Activated CD4-positive, alpha-beta memory T cell treated with anti-CD3 and anti-CD28 coated beads, Interleukin-2, amount 10 ng/mL, durations not matched to agents 7 days and 5 days (primary cell): ENCODE measurements at regions of chr1 and their contacts with region 1.

Region 1: DNA sequence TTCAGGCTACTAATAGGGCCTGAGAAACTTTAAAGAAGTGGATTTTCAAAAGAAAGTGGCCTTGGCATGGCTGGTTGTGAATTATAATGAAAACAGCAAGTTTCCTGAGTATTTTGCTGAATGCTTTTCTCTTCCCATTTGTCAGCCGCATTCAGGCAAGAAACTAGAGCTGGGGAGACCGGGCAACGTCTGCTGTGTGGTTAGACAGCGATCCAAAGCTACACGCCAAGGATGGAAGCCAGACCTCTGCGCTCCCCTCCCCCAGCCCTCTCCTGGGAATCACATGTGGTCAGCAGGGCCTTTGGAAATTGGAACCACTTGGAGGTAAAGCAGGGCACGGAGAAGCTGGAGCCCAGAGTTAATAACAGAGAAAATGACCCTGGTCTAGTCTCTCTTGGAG is 114.1 kb upstream of the CD34 start:
- DNase-seq: no peak
- H3K4me3 Mint-ChIP-seq: no peak overlapping the region
- H3K27ac Mint-ChIP-seq: no peak overlapping the region
- H3K4me1 Mint-ChIP-seq: no peaks in the 10 kb centered on the region
- H3K27me3 Mint-ChIP-seq: peaks cover 2% of the 10 kb centered on the region

Region 2: DNA sequence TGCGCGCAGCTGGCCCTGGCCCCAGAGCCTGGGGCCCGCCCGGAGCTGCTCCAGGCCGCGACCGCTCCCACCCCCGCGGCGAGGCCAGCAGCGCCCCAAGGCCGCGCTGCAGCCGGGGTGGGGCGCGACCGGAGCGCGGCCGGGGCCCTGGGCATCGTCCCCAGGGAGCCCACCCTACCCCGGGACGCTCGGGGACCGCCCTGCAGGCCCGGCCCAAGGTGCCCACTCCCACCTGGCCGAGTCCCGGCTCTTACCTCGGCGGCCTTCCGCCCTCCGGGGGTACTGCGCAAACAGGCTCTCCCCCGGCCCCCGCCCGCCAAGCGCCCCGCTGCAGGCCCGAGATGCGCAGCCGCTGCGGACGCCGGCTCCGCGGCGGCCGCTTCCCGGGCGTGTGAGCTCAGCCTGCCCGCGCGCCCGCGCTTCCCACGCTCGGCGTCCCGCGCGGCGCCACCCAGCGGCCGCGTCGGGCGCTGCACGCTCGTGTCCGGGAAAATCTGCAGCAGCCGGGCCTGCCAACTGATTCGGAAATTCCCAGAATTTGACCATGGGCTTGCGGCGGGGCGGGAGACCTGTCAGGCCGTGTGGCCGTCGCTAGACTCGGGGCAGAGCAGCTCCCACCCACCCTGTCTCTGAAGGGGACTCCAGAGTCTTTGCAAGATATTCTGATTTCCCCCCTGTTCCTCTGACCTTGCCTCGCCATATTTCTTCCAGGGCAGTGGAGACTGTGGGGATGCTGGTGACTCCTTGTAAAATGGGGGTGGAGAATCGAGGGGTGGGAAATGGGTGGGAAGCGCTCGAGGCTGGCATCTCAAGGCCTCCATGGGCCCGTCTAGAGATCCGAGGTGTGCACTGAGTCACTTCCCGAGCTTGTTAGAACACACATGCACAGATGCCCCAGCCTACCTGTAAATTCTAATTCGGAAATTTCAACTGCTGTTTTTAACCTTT is 156.0 kb before region 1 on chr1:
- CTCF ChIA-PET with region 1: no interaction called
- POLR2A ChIA-PET with region 1: no interaction called
- DNase-seq: peak; percentile 76
- H3K4me3 Mint-ChIP-seq: peak overlapping the region; percentile 93
- H3K27ac Mint-ChIP-seq: peak overlapping the region; percentile 91
- H3K4me1 Mint-ChIP-seq: peaks cover 84% of the 10 kb centered on the region
- H3K27me3 Mint-ChIP-seq: no peaks in the 10 kb centered on the region

Region 3: GRCh38 chr1:207997486-207998268 is 27.4 kb before region 1 on chr1:
- CTCF ChIA-PET with region 1: interaction called, 10 read pairs
- POLR2A ChIA-PET with region 1: no interaction called
- DNase-seq: peak; percentile 58
- H3K4me3 Mint-ChIP-seq: no peak overlapping the region
- H3K27ac Mint-ChIP-seq: no peak overlapping the region
- H3K4me1 Mint-ChIP-seq: no peaks in the 10 kb centered on the region
- H3K27me3 Mint-ChIP-seq: peaks cover 17% of the 10 kb centered on the region

Region 4: DNA sequence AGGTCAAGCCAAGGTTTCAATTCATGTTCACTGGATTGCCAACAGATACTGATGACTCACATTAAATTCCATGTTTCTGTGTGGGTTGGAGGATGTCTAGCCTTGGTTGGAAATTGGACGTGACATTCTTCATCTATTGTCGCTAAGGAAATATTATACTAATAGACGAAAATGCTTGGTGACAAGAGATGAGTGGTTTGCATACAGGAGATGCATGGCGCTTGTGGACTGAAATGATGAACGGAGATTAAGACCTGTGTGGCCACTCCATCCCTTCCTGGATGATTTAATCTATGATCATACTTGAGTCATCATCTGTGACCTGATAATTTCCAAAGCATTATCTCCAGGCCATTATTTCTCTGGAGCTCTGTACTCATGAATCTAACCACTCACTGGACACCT is 17.1 kb before region 1 on chr1:
- CTCF ChIA-PET with region 1: interaction called, 11 read pairs
- POLR2A ChIA-PET with region 1: no interaction called
- DNase-seq: no peak
- H3K4me3 Mint-ChIP-seq: no peak overlapping the region
- H3K27ac Mint-ChIP-seq: no peak overlapping the region
- H3K4me1 Mint-ChIP-seq: no peaks in the 10 kb centered on the region
- H3K27me3 Mint-ChIP-seq: peaks cover 4% of the 10 kb centered on the region

Region 5: DNA sequence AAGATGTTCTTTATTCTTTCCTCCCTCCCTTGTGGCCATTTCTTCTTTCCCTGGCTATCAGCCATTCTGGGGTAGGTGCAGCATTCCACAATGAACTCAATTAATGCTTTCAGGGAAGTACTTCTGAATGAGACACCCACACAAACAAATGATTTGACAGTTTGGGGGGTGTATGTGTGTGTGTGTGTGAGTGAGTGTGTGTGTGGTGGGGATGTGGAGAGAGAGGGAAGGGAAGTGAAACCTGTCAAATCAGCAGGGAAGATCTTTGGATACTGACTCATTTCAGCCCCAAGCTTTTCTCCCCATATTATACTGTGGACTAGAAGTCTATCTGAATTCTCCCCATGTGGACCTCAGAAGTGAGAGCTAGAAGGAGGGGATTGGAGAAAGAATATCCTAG is 40.8 kb after region 1 on chr1:
- CTCF ChIA-PET with region 1: no interaction called
- POLR2A ChIA-PET with region 1: no interaction called
- DNase-seq: no peak
- H3K4me3 Mint-ChIP-seq: no peak overlapping the region
- H3K27ac Mint-ChIP-seq: no peak overlapping the region
- H3K4me1 Mint-ChIP-seq: no peaks in the 10 kb centered on the region
- H3K27me3 Mint-ChIP-seq: peaks cover 3% of the 10 kb centered on the region

Region 6: DNA sequence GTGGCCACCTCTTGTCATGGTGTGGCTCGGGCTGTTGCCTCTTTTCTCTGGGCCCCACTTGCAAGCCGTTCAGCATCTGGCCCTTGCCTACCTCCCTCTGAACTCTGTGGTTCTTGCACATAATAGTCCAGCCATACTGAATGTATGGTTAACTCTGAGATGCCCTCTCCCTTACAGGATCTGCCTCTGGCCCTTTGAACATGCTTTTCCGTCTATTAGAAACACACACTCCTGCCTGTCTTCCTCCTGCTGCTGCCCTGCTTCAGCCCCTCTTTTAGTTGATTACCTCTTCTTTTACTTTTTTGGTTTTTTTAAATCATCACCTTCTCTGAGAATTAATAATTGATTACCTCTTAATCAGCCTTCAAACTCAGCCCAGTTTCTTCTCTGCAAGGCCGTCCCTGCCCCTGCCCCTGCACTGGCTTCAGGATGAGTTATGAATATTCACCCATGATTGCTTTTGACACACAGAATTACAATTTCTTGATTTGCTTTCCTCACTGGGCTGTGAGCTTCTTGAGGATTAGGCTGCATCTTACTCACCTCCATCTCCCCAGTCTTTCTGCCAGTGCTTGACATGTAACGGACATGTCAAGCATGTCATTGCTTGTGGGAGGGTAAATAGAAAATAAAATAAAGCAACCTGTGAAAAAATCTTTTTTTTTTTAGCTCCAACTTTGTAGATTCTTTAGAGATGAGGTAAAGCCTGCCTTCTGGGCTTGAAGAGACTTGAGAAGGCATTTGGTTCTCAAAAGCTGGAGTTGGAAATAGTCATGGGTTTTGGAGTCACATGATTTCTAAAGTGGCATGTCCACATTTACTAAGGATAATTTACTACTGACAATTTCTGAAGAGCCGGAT is 60.9 kb after region 1 on chr1:
- CTCF ChIA-PET with region 1: interaction called, 12 read pairs
- POLR2A ChIA-PET with region 1: no interaction called
- DNase-seq: no peak
- H3K4me3 Mint-ChIP-seq: no peak overlapping the region
- H3K27ac Mint-ChIP-seq: no peak overlapping the region
- H3K4me1 Mint-ChIP-seq: peaks cover 13% of the 10 kb centered on the region
- H3K27me3 Mint-ChIP-seq: no peaks in the 10 kb centered on the region

Region 7: DNA sequence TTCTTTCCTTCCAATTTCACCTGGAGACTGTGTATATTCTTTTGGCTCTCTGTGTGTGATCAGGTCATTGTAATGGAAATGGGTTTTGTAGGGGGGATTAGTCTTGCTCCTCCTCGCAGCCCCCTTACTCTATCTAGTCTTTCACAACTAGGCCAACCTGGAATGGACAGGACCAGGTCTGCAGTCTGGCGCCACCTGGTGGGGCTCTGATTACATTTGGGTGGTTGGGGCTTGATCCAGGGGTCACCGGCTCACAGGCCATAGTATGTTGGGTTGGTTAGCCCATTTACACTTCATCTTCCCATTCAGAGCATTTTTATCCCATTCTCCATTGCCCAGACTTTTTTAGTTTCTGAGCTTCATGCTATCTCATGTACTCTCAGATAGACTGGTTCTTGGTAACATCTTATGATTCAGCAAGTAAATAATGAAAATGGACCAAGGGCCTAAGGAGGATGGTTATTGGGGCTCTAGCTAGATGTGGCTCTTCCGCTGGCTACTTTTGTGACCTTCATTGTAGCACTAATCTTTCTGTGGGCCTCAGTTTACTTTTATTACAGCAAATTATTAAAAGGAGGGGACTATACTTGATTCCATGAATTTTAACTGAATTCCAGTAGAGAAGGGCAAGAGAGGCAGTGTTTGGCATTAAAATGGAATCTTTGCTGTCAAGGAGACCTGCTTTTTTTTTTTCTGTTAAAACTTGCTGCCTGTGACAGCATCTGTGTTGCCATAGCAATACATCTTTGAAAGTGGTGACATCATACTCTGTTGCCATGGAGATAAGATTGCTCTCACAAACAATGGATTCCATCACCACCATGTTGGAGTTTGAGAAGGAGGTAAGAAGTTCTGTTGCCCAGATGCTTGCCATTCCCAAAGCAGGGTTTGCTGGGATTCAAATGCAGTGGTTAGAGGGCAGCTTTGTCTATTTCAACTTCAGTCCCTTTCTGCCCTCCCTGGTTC is 69.0 kb after region 1 on chr1:
- CTCF ChIA-PET with region 1: interaction called, 51 read pairs
- POLR2A ChIA-PET with region 1: no interaction called
- DNase-seq: peak; percentile 59
- H3K4me3 Mint-ChIP-seq: no peak overlapping the region
- H3K27ac Mint-ChIP-seq: no peak overlapping the region
- H3K4me1 Mint-ChIP-seq: no peaks in the 10 kb centered on the region
- H3K27me3 Mint-ChIP-seq: no peaks in the 10 kb centered on the region

Region 8: DNA sequence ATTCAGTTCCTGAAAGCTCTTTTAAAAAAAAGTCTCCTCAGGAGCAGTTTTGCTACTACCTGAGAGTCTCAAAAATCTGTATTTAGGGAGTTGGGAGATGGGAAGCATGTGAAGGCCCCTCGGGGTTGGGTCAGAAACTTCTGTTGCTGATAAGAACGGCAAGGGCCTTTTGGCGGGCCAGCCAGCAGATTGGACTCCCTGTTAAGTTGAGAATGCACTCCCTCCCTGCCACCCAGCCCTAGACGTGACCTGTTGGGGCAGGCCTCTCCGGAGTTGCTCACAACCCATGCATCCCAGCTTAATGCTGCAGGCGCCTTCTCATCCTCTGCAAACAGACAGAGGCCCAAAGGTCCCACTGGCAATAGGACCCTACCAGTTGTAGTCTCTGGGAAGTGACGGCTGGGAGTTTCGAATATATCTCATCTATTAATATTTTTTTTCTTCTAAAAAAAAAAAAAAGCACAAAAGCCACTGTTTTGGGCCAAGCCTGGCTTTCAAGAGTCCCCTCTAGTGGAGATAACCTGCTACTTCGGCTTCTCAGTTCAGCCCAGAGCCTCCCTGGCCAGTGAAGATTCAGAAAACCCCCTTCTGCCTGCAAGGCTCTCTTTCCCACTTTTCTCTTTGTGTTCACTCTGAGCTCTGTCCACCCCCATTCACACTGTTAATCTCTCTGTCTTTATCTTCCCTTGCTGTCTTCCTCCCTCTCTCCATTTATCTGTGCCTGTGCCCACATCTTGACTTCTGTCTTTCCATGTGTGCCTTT is 213.9 kb after region 1 on chr1:
- CTCF ChIA-PET with region 1: interaction called, 78 read pairs
- POLR2A ChIA-PET with region 1: interaction called, 5 read pairs
- DNase-seq: no peak
- H3K4me3 Mint-ChIP-seq: no peak overlapping the region
- H3K27ac Mint-ChIP-seq: no peak overlapping the region
- H3K4me1 Mint-ChIP-seq: peaks cover 8% of the 10 kb centered on the region
- H3K27me3 Mint-ChIP-seq: peaks cover 67% of the 10 kb centered on the region

Region 9: DNA sequence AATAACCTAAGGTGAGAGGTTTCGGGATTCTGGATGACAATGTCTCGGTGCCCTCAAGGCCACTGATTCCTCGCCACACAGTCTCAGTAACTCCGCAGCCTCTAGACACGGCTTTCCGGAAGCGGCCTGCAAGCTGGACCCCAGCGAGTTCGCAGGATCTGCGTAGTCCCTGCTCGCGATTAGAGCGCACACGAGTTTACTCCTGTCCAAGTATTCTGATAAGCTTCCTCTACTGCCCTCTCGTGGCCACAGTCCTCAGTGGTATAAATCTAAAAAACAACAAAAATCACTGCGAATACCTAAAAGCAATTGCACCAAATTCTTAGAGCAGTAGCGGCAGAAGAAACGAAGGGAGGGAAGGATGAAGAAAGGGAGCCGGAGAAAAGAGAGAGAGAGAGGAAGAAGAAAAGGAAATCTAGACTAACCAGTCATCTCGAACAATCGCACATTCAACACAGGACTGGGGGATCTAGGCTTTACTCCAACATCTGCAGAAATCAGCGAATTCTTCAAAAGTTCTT is 220.2 kb after region 1 on chr1:
- CTCF ChIA-PET with region 1: interaction called, 78 read pairs
- POLR2A ChIA-PET with region 1: interaction called, 5 read pairs
- DNase-seq: peak; percentile 81
- H3K4me3 Mint-ChIP-seq: peak overlapping the region; percentile 64
- H3K27ac Mint-ChIP-seq: no peak overlapping the region
- H3K4me1 Mint-ChIP-seq: peaks cover 15% of the 10 kb centered on the region
- H3K27me3 Mint-ChIP-seq: peaks cover 45% of the 10 kb centered on the region